ENCODE measurements at regions of chr12 and their contacts with region 1.

Region 1: DNA sequence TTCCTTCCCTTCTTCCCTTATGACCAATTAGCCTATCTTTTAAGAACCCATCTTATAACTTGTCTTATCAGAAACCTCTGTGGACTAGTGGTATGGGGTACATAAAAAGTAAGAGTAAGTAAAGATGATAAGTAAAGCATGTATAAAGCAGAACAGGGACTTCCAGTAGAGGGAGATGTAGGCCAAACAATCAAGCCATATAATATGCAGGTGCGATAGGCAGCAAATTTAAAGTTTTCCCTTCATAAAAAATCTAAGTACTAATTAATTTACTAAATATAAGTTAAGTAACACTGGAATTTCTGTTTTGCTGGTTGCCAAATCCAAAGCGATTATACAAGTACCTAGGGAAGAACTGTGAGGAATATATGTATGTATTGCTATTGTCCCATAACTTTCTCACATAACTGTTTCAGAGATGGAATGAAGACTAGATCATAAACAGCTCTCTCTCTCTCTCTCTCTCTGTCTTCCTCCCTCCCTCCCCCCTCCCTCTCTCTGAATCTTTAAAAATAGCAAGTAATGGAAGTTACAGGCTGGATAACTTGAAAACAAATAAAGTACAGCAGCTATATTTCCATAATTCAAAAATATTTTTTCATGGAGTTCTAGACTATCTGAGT is 25.7 kb downstream of the METTL25 start:
- DNase-seq: peak; percentile 58
- ATAC-seq: peak; percentile 90
- H3K4me3 ChIP-seq: no peak overlapping the region
- H3K27ac ChIP-seq: no peak overlapping the region
- H3K4me1 ChIP-seq: no peaks in the 10 kb centered on the region
- H3K27me3 ChIP-seq: no peaks in the 10 kb centered on the region
- CTCF ChIP-seq: peak; percentile 80

Region 2: DNA sequence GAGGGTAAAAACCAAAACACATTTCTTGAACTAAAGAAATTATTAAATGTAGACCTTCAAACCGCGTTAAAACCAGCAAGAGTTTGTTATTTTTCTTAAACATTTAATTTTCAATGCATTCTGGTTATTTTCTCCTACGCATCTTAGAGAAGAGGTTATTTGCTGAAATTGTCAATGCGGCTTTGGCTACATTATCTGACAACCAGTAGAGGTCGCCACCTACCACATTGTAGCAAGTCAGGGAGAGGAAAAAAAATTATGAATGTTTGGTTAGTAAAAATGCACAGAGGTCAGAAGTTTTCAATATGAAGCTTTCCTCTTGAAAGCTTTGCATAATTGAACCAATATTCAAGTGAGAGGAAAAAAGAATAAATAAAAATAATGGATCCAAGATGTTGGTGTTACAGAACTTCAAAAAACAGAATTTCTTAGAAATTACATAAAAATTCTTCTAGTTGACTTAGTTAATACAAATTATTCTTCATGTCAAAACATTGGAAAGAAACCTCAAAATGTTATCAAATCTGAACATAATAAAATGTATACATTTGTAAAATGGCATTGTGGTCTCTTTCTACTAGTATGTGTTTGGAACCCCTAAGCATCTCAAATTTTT is 143.2 kb after region 1 on chr12:
- CTCF ChIA-PET with region 1: no interaction called
- POLR2A ChIA-PET with region 1: no interaction called
- intact Hi-C with region 1: loop called (anchors 1 kb)
- DNase-seq: peak; percentile 77
- ATAC-seq: peak; percentile 60
- H3K4me3 ChIP-seq: no peak overlapping the region
- H3K27ac ChIP-seq: no peak overlapping the region
- H3K4me1 ChIP-seq: no peaks in the 10 kb centered on the region
- H3K27me3 ChIP-seq: no peaks in the 10 kb centered on the region
- CTCF ChIP-seq: peak; percentile 97

Region 3: DNA sequence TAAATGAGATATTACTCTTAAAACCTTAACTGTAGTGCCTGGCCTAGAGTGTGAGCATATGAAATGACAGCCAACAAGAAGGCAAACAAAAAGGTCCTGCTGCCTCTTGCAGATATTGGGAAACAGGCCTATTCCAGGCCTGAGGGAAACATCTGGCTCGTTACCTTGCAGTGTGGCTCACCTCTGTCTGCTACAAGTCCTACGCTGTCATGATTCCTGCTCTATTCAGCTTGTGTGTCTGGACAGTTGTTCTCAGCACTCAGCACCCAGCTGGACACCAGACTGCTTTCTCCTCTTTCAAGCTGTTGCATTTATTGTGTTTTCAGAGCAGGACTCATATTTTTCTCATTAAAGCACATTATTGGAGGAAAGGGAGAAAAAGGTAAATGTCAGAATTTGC is 416.1 kb after region 1 on chr12:
- CTCF ChIA-PET with region 1: no interaction called
- POLR2A ChIA-PET with region 1: no interaction called
- intact Hi-C with region 1: no loop called
- DNase-seq: no peak
- ATAC-seq: no peak
- H3K4me3 ChIP-seq: no peak overlapping the region
- H3K27ac ChIP-seq: no peak overlapping the region
- H3K4me1 ChIP-seq: no peaks in the 10 kb centered on the region
- H3K27me3 ChIP-seq: no peaks in the 10 kb centered on the region
- CTCF ChIP-seq: no peak

Measured in PC-3 (cell line).